Calu3 (cell line): ENCODE measurements at regions of chr15 and their contacts with region 1.

Region 1: DNA sequence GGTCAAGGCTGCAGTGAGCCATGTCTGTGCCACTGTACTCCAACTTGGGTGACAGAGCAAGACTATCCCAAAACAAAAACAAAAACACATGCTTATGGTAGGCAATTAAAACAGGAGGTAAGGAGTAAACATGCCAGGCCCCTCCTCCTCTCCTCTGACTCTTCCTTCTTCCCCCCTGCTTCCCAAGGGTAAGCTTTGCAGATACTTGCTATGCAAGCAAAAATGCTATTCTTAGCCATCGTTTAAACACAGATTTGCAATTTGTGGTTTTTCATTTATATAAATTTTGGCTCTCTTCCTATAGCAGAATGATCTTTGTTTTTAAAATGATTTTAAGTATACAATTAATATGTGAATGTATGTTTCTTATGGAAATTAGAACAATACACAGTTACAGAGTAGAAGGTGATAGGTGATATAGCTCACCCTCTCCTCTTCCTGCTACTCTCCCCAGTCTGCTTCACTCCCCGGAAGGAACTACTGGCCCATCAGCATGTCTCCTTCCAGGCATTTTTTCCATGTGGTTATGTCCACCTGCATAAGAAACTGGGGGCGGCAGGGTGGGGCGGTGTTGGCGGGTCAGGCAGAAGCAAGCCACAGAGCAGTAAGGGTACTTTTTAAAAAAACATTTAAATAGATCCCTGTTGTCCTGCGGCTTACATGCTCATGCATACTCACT is 42.1 kb downstream of the IGF1R start:
- DNase-seq: no peak
- H3K4me3 Mint-ChIP-seq: no peak overlapping the region
- H3K27ac Mint-ChIP-seq: no peak overlapping the region
- H3K4me1 Mint-ChIP-seq: peaks cover 45% of the 10 kb centered on the region
- H3K27me3 Mint-ChIP-seq: no peaks in the 10 kb centered on the region
- CTCF ChIP-seq: no peak

Region 2: DNA sequence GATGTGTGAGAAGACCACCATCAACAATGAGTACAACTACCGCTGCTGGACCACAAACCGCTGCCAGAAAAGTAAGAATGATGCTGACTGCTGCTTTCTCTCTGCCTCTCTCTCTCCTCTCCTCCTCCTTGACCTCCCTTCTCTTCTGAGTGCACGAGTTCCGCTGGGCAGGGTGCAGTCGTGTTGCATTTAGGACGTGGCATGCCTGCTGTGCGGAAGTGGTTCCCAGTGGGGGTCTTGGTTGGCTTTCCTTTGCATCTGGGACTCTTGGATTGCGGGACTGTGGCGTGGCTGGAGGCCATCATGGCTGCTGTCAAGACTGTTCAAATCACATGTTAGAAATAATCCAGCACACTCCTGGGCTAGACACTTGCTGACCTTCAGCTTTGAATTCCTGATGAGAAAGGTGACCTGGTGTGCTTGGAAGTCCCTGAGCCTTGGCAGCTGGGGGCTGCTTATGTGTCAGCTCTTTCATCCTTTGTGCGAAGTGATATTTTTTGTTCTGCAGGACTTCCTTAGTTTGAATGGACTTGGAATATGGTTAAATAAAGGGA is 17.7 kb after region 1 on chr15:
- CTCF ChIA-PET with region 1: no interaction called
- intact Hi-C with region 1: loop called (anchors 2 kb)
- DNase-seq: no peak
- H3K4me3 Mint-ChIP-seq: no peak overlapping the region
- H3K27ac Mint-ChIP-seq: no peak overlapping the region
- H3K4me1 Mint-ChIP-seq: peaks cover 31% of the 10 kb centered on the region
- H3K27me3 Mint-ChIP-seq: no peaks in the 10 kb centered on the region
- CTCF ChIP-seq: no peak

Region 3: DNA sequence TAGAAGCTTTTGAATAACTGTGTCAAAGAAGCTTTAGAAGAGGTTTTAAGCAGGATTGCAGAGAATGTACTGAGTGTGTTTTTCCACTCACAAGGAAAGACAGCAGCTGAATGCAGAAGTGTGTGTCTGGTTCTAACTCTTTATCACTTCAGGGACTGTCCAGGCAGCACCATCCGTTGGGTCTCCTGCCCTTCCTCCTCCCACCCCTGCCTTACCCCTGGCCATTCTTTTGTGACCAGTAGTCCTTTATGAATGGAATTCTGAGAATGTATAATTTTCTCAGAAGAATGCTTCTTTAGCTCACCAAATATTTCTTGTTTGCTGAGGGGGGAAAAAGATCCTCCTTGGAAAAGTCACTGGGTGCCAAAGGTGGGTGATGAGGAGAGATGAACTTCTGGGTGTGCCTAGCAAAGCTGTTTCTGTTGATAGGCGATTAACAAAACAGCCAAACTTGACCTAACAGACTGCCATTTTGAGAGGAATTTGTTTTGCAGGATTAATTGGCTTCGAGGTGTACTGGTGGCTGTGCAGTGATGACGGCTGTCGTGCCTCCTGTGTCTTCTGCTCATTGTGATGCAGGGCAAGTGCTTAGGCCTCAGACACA is 28.8 kb after region 1 on chr15:
- CTCF ChIA-PET with region 1: no interaction called
- intact Hi-C with region 1: no loop called
- DNase-seq: no peak
- H3K4me3 Mint-ChIP-seq: no peak overlapping the region
- H3K27ac Mint-ChIP-seq: no peak overlapping the region
- H3K4me1 Mint-ChIP-seq: peaks cover 52% of the 10 kb centered on the region
- H3K27me3 Mint-ChIP-seq: no peaks in the 10 kb centered on the region
- CTCF ChIP-seq: no peak